Heart left ventricle (tissue), 16 donors: ENCODE measurements at regions of chr12 and their contacts with region 1.

Region 1: GRCh38 chr12:2273288-2273687 is 220.5 kb downstream of the CACNA1C start:
- DNase-seq: peak in 4 of 5 donors; percentile 48 to 63 (median 60)
- ATAC-seq: peak; percentile 60 to 72 (median 66)
- H3K4me3 ChIP-seq: no peak overlapping the region
- H3K27ac ChIP-seq: peak overlapping the region in 6 of 12 donors; percentile 11 to 73 (median 44)
- H3K4me1 ChIP-seq: peaks cover 0 to 73% (median 20%) of the 10 kb centered on the region in 12 donors
- H3K27me3 ChIP-seq: no peaks in the 10 kb centered on the region
- CTCF ChIP-seq: peak in 9 of 12 donors; percentile 35 to 61 (median 49)
- POLR2A ChIP-seq: no peak

Region 2: DNA sequence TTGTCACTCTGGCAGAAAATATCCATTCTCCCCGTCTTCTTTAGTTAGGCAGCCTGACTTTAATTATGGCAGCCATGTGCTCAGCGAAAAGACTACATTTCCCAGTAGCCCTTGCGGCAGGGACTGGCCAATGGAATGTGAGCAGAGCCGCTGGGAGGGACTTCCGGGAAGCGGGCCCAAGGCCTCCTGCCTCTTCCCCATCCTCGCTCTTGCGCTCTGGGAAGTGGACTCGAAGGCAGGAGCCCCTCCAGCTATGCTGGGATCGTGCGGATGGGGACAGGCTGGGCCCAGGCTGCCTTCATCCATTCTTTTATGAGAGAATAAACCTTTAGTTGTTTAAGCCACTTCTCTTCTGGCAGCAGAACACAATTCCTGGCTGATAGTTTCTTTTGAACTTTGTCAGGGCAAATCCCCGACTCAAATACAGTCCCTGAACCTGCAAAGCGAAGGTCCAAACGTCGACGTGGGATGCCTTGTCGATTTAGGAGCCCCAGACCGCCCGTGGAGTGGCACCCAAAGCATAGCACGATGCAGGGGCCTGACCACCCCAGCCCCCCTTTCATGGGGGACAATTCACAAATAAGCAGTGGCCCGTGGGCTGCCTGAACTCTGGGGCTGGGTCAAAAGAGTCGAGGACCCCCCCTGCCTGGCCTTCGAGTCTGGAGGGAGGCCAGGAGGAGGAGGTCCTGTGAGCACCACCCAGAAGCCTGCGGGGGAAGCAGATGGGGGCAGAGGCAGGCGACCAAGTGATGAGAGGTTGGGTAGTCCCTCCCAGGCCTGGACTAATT is 468.5 kb before region 1 on chr12:
- intact Hi-C with region 1: loop called in 1 of 10 experiments (anchors 10 kb)
- DNase-seq: peak; percentile 91 to 94 (median 92)
- ATAC-seq: peak; percentile 80 to 91 (median 84)
- H3K4me3 ChIP-seq: no peak overlapping the region
- H3K27ac ChIP-seq: peak overlapping the region in 6 of 12 donors; percentile 43 to 73 (median 56)
- H3K4me1 ChIP-seq: peaks cover 0 to 31% (median 16%) of the 10 kb centered on the region in 12 donors
- H3K27me3 ChIP-seq: no peaks in the 10 kb centered on the region
- CTCF ChIP-seq: no peak
- POLR2A ChIP-seq: no peak

Region 3: DNA sequence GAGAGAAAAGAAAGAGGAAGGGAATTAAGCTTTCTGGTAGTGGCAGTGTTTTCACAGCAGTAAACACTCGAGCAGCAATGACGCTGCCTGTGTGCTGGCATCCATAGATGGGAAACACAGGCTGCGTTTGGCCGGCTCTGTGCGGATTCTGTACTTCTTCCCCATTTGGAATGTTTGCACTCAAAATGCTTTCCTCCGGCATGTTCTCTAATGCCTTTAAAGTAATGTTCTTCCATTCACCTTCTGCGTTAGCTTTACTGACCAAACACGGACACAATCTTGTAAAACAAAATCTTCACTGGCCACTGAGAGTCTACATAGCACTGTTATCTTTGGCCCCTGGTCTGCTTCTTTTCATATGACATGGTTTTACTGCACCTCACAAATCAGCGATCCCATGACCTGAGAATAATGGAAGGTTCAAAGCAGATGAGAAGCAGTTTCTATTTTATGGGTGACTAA is 300.4 kb before region 1 on chr12:
- intact Hi-C with region 1: loop called in 1 of 10 experiments (anchors 10 kb)
- DNase-seq: peak in 4 of 5 donors; percentile 51 to 64 (median 56)
- ATAC-seq: peak; percentile 65 to 82 (median 76)
- H3K4me3 ChIP-seq: peak overlapping the region; percentile 11 to 60 (median 52)
- H3K27ac ChIP-seq: peak overlapping the region; percentile 75 to 92 (median 86)
- H3K4me1 ChIP-seq: peaks cover 0 to 43% (median 11%) of the 10 kb centered on the region in 12 donors
- H3K27me3 ChIP-seq: no peaks in the 10 kb centered on the region
- CTCF ChIP-seq: no peak
- POLR2A ChIP-seq: no peak

Region 4: DNA sequence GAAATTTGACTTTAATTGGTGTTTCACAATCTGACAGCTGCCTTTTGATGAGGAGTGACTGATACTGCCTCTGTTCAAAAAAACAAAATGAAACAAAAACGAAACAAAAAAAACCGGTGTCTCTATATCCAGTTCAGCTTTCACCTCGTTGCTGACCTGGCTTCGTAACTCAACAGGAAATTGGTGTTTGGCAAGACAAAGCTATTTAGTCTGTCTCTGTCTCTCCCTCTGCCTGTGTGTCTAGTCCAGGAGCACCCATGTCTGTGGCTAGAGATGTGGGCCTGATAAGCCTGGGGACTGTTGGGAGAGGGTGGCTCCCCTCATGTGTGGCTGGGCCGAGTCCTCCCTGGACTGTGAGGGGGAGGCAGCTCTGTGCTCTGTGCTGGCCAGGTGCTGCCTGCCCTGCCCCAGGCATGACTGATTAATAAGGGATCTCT is 209.2 kb before region 1 on chr12:
- intact Hi-C with region 1: loop called in 6 of 10 experiments (anchors 5 to 10 kb)
- DNase-seq: no peak
- ATAC-seq: peak in 3 of 4 donors; percentile 28 to 44 (median 30)
- H3K4me3 ChIP-seq: peak overlapping the region in 6 of 12 donors; percentile 1 to 37 (median 18)
- H3K27ac ChIP-seq: peak overlapping the region in 11 of 12 donors; percentile 18 to 91 (median 62)
- H3K4me1 ChIP-seq: peaks cover 0 to 77% (median 32%) of the 10 kb centered on the region in 12 donors
- H3K27me3 ChIP-seq: no peaks in the 10 kb centered on the region
- CTCF ChIP-seq: no peak
- POLR2A ChIP-seq: no peak

Region 5: DNA sequence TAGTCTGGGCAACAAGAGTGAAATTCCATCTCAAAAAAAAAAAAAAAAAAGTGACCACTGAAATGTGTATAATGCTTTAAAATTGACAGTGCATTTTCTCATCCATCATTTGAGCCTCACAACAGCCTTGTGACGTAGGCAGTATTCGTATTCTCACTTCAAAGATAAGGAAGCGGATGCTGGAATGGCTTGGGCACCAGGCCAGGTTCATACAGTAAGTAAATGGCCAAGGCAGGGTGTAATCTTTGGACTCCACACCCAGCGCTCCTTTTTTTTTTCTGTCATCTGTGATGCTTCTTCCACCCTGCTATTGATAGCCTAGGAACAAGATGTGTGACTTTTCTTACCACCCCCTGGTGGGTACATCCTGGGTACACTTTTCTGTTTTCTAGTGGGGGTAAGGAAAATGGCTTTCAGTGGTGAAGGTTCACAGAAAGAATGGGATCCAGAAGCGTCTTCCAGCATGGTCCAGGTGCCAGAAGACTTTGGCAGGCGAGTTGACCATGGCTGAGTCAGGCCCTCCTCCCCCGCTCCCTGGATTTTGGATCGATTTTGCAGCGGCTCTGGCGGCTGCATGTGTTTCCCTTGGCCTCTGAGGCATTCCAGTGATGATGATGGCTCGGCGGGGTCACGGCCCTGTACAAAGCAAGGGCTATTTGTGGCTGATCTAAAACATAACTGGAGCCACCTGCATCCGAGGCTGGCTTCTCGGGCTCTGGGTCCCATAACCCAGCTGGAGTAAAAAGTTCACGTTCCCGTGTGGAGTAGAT is 109.9 kb before region 1 on chr12:
- intact Hi-C with region 1: loop called in 1 of 10 experiments (anchors 5 kb)
- DNase-seq: peak; percentile 91 to 95 (median 93)
- ATAC-seq: peak; percentile 79 to 94 (median 91)
- H3K4me3 ChIP-seq: no peak overlapping the region
- H3K27ac ChIP-seq: peak overlapping the region; percentile 60 to 86 (median 82)
- H3K4me1 ChIP-seq: peaks cover 4 to 67% (median 43%) of the 10 kb centered on the region in 12 donors
- H3K27me3 ChIP-seq: no peaks in the 10 kb centered on the region
- CTCF ChIP-seq: peak in 4 of 12 donors; percentile 5 to 14 (median 8)
- POLR2A ChIP-seq: no peak

Region 6: GRCh38 chr12:2179953-2180736 is 93.1 kb before region 1 on chr12:
- intact Hi-C with region 1: loop called in 2 of 10 experiments (anchors 5 to 10 kb)
- DNase-seq: peak; percentile 51 to 91 (median 81)
- ATAC-seq: peak; percentile 80 to 89 (median 88)
- H3K4me3 ChIP-seq: no peak overlapping the region
- H3K27ac ChIP-seq: peak overlapping the region; percentile 56 to 90 (median 78)
- H3K4me1 ChIP-seq: peaks cover 9 to 70% (median 46%) of the 10 kb centered on the region in 12 donors
- H3K27me3 ChIP-seq: no peaks in the 10 kb centered on the region
- CTCF ChIP-seq: no peak
- POLR2A ChIP-seq: no peak